GM10248 (cell line): ENCODE measurements at regions of chr3 and their contacts with region 1.

Region 1: GRCh38 chr3:99324636-99325203 is 313.7 kb upstream of the COL8A1 start:
- DNase-seq: no peak
- CTCF ChIP-seq: no peak

Region 2: DNA sequence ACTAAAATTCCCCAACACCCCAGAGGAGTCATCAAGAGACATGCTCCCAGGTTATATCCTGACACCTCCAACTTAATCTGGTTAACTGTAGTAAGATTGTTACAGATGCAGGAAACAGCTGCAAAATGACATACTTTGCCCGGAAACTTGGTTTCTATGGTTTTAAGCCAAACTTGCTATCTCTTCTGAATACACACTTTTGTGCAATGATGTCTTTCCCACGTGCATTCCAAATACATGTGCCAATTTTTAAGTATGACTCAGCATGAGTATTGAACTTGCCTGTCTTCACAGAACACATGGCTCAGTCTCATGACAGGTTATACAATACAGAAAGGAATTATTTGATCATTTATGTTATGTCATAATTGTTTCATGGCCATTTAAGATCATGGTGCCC is 216.2 kb before region 1 on chr3:
- CTCF ChIA-PET with region 1: no interaction called
- POLR2A ChIA-PET with region 1: no interaction called
- DNase-seq: no peak
- CTCF ChIP-seq: no peak

Region 3: DNA sequence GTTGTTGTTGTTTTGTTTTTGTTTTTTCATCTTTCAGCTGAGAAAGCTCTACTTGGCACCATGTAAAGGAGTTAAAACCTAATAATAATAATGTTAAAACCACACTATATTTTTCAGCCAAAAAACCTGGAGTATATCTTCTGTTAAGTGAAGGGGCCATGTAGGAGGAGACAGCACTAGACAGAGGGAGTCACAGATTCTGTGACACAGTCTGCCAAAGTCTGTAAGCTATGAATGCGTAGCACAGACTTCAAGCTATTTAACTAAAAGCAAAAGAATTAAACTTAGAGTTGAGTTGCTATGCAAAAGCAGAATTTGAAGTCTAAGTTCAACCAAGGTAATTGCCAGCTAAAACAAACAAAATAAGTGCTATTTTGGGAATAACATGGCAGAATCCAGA is 17.7 kb after region 1 on chr3:
- CTCF ChIA-PET with region 1: interaction called, 11 read pairs
- POLR2A ChIA-PET with region 1: no interaction called
- DNase-seq: no peak
- CTCF ChIP-seq: no peak